CD14-positive monocyte (primary cell): ENCODE measurements at regions of chr3 and their contacts with region 1.

Region 1: DNA sequence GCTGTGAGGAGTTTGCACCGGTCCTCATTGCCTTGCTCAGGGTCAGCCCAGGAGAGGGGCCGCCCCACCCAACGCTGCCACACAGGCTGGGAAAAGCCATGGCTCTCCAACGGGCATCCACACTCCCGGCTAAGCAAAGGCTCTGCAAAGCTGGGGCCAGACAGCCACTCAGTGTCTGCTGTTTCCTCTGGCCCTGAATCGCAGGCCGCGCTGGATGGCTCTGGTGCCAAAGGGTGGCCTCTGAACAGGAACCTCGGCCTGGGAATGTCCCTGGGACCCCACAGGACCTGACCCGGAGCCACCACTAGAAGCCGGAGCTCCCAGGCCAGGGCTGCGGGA is 42.9 kb downstream of the RPN1 start:
- DNase-seq: no peak
- H3K4me3 ChIP-seq: peak overlapping the region; percentile 51 to 74 (median 59)
- H3K4me3 Mint-ChIP-seq: peak overlapping the region; percentile 71 to 77
- H3K27ac ChIP-seq: no peak overlapping the region
- H3K27ac Mint-ChIP-seq: no peak overlapping the region
- H3K4me1 ChIP-seq: peaks cover 36 to 44% of the 10 kb centered on the region in 2 donors
- H3K4me1 Mint-ChIP-seq: peaks cover 41% of the 10 kb centered on the region
- H3K27me3 ChIP-seq: no peaks in the 10 kb centered on the region
- H3K27me3 Mint-ChIP-seq: peaks cover 2 to 7% (median 4%) of the 10 kb centered on the region in 3 donors
- CTCF ChIP-seq: no peak

Region 2: DNA sequence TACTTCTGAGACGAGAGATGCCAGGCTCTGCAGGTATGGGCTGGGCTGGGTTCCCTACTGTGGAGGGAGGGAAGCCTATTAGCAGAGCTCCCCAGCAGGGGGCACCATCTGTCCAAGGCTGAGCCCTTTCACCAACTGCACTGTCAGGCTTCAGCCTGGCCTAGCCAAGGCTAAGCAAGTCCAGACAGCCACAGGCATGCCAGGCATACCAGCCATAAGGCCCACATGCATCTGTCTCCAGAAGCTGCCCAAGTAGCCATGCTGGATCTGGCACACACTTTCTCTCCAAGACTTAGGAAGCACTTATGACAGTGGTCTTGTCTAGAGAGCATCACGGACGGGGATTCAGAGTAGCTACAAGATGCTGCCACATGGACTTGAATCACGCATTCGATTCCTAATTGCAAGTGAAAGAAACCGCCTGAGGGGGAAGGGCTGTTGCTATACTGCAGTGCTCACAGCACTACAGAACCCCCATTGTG is 512.4 kb before region 1 on chr3:
- intact Hi-C with region 1: loop called in 1 of 2 experiments (anchors 10 kb)
- DNase-seq: peak; percentile 55 to 70 (median 65)
- H3K4me3 ChIP-seq: no peak overlapping the region
- H3K4me3 Mint-ChIP-seq: no peak overlapping the region
- H3K27ac ChIP-seq: no peak overlapping the region
- H3K27ac Mint-ChIP-seq: no peak overlapping the region
- H3K4me1 ChIP-seq: no peaks in the 10 kb centered on the region
- H3K4me1 Mint-ChIP-seq: no peaks in the 10 kb centered on the region
- H3K27me3 ChIP-seq: no peaks in the 10 kb centered on the region
- H3K27me3 Mint-ChIP-seq: no peaks in the 10 kb centered on the region
- CTCF ChIP-seq: peak; percentile 90

Region 3: DNA sequence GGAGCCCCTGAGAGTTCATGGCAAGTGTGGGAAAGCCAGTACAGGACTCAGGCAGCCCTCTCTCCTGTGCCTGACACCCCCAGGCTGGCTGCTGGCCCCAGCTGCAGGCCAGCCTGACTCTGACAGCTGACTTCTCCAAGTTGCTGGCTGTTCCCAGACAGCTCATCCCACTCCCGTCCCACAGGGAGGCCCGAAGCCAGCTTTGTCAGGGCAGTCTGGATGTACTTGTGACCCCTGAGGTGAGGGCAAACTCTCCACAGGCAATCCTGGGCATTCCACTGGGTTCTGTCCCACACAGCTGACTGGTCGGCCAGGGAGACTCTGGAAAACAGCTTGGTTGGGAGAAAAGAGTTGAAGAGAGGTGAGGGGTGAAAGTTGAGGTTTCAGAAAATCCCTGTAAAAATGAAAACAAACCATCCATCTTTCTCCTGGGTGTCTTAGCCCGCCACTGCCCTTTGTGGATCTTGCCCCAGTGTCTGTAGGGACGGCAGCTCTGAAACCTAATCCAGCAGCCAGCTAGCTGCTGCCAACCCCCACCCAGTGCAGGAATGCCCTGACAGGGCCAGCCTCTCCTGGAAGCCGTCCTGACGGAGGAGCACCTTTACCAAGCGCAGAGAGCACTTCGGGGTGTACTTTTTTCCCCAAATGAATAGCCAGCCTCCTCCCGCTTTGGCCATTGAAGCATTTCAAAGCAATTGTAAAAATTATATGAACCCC is 228.9 kb before region 1 on chr3:
- intact Hi-C with region 1: no loop called
- DNase-seq: no peak
- H3K4me3 ChIP-seq: no peak overlapping the region
- H3K4me3 Mint-ChIP-seq: no peak overlapping the region
- H3K27ac ChIP-seq: no peak overlapping the region
- H3K27ac Mint-ChIP-seq: no peak overlapping the region
- H3K4me1 ChIP-seq: peaks cover 0 to 4% of the 10 kb centered on the region in 2 donors
- H3K4me1 Mint-ChIP-seq: peaks cover 5% of the 10 kb centered on the region
- H3K27me3 ChIP-seq: no peaks in the 10 kb centered on the region
- H3K27me3 Mint-ChIP-seq: no peaks in the 10 kb centered on the region
- CTCF ChIP-seq: no peak

Region 4: GRCh38 chr3:128426128-128426921 is 181.4 kb before region 1 on chr3:
- intact Hi-C with region 1: loop called (anchors 1 to 2 kb)
- DNase-seq: peak; percentile 12 to 47 (median 45)
- H3K4me3 ChIP-seq: peak overlapping the region in 2 of 3 experiments; percentile 18 to 65
- H3K4me3 Mint-ChIP-seq: peak overlapping the region in 1 of 2 donors; percentile 59
- H3K27ac ChIP-seq: no peak overlapping the region
- H3K27ac Mint-ChIP-seq: no peak overlapping the region
- H3K4me1 ChIP-seq: peaks cover 7 to 11% of the 10 kb centered on the region in 2 donors
- H3K4me1 Mint-ChIP-seq: no peaks in the 10 kb centered on the region
- H3K27me3 ChIP-seq: peaks cover 0 to 21% of the 10 kb centered on the region in 2 donors
- H3K27me3 Mint-ChIP-seq: peaks cover 15 to 32% (median 30%) of the 10 kb centered on the region in 3 donors
- CTCF ChIP-seq: peak; percentile 97

Region 5: GRCh38 chr3:128482666-128483656 is 124.7 kb before region 1 on chr3:
- intact Hi-C with region 1: loop called in 1 of 2 experiments (anchors 5 kb)
- DNase-seq: peak in 1 of 3 donors; percentile 33
- H3K4me3 ChIP-seq: peak overlapping the region in 1 of 3 experiments; percentile 28
- H3K4me3 Mint-ChIP-seq: peak overlapping the region; percentile 38 to 87
- H3K27ac ChIP-seq: no peak overlapping the region
- H3K27ac Mint-ChIP-seq: no peak overlapping the region
- H3K4me1 ChIP-seq: peaks cover 22 to 27% of the 10 kb centered on the region in 2 donors
- H3K4me1 Mint-ChIP-seq: peaks cover 31% of the 10 kb centered on the region
- H3K27me3 ChIP-seq: peaks cover 52 to 68% of the 10 kb centered on the region in 2 donors
- H3K27me3 Mint-ChIP-seq: peaks cover 71 to 83% (median 71%) of the 10 kb centered on the region in 3 donors
- CTCF ChIP-seq: no peak

Region 6: DNA sequence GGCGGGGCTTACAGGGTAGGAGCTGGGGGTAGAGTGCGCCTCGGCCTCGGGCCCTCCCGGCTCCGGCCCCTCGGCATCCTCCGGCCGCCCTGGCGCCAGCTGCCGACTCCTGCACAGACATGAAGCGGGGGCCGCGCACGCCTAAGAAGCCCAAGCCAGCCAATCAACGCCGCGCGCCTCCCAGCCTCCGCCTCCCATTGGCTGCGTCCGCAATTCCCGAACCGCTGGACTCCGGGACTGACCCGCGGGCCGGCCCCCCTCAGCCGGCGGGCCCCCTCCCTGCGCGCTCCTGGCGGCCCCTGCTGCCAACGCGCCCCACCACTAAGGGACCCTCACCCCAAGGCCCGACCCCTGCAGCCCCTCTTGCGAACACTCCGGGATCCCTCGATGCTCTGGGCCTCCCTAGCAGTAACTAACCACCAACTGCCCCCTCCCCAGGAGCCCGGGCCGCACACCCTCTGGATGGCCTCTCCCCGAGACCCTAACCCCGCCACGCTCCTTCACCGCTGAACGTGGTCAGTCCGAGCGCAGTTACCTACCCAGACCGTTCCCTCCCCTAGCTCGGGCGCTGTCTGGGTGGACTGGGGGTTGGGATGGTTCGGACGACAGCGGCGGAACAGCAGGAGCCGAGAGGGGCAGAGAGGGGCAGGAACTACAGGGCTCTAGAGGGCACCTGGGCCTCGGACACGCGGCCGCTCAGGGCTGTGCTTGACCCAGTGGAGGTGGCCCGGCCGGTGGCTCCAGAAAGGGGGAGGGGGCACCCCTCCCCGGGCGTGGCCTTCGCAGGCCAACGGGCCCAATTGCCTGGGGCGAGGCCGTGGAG is 119.7 kb before region 1 on chr3:
- intact Hi-C with region 1: loop called (anchors 5 kb)
- DNase-seq: peak; percentile 35 to 62 (median 46)
- H3K4me3 ChIP-seq: peak overlapping the region in 2 of 3 experiments; percentile 51 to 78
- H3K4me3 Mint-ChIP-seq: peak overlapping the region; percentile 85 to 97
- H3K27ac ChIP-seq: no peak overlapping the region
- H3K27ac Mint-ChIP-seq: peak overlapping the region in 1 of 7 donors; percentile 69
- H3K4me1 ChIP-seq: peaks cover 57 to 69% of the 10 kb centered on the region in 2 donors
- H3K4me1 Mint-ChIP-seq: peaks cover 55% of the 10 kb centered on the region
- H3K27me3 ChIP-seq: peaks cover 85 to 99% of the 10 kb centered on the region in 2 donors
- H3K27me3 Mint-ChIP-seq: peaks cover 87 to 100% (median 96%) of the 10 kb centered on the region in 3 donors
- CTCF ChIP-seq: no peak

Region 7: GRCh38 chr3:128497387-128498126 is 110.1 kb before region 1 on chr3:
- intact Hi-C with region 1: loop called (anchors 5 kb)
- DNase-seq: peak; percentile 28 to 54 (median 33)
- H3K4me3 ChIP-seq: peak overlapping the region; percentile 36 to 70 (median 43)
- H3K4me3 Mint-ChIP-seq: peak overlapping the region; percentile 77 to 90
- H3K27ac ChIP-seq: no peak overlapping the region
- H3K27ac Mint-ChIP-seq: peak overlapping the region in 1 of 7 donors; percentile 72
- H3K4me1 ChIP-seq: peaks cover 8 to 18% of the 10 kb centered on the region in 2 donors
- H3K4me1 Mint-ChIP-seq: peaks cover 14% of the 10 kb centered on the region
- H3K27me3 ChIP-seq: peaks cover 17 to 58% of the 10 kb centered on the region in 2 donors
- H3K27me3 Mint-ChIP-seq: peaks cover 48 to 66% (median 60%) of the 10 kb centered on the region in 3 donors
- CTCF ChIP-seq: peak; percentile 91

Region 8: GRCh38 chr3:128559486-128560225 is 48.0 kb before region 1 on chr3:
- intact Hi-C with region 1: no loop called
- DNase-seq: no peak
- H3K4me3 ChIP-seq: no peak overlapping the region
- H3K4me3 Mint-ChIP-seq: peak overlapping the region in 1 of 2 donors; percentile 42
- H3K27ac ChIP-seq: no peak overlapping the region
- H3K27ac Mint-ChIP-seq: no peak overlapping the region
- H3K4me1 ChIP-seq: peaks cover 4 to 10% of the 10 kb centered on the region in 2 donors
- H3K4me1 Mint-ChIP-seq: peaks cover 12% of the 10 kb centered on the region
- H3K27me3 ChIP-seq: peaks cover 3 to 24% of the 10 kb centered on the region in 2 donors
- H3K27me3 Mint-ChIP-seq: peaks cover 29 to 40% (median 35%) of the 10 kb centered on the region in 3 donors
- CTCF ChIP-seq: no peak